ENCODE measurements at regions of chr7 and their contacts with region 1.

Region 1: DNA sequence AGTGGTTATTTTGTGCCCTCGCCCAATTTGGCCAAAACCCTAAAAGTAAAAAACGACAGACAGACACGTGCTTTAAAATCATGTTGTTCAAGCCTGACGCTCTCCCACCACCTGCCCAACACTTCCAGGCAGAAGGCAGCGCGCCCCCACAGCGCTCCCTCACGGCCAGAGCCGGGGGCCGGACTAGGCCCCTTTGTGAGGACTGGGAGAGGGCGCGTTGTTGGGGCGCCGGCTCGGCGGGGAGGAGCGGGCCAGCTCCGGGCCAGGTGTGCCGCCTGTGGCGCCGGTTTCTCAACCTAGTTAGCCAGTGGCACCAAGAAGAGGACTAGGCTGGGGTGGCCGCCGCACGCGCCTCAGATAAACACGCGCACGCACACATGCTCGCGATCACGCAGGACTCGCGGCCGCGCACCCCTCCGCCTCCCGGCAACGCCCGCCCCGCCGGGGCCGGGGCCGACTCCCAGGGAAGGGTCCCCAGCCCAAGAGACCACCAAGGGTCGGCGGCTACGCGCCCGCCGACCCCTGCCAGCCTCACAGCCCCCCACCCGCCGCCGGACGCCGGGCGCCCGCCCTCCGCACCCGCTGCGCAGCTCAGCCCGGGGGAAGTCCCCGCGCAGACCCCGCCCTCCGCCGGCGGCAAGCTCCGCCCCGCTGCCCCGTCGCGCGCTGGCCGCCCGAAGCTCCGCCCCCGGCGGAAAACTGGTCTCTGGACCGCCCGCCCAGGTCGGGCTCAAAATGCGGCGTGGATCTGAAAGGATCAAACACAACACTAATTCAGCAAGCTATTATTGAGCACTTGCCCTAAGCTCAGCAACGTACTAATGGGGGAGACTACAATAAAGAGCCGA is at the start of gene IMMP2L:
- DNase-seq: peak; percentile 84 to 94
- H3K4me3 ChIP-seq: peak within 1 kb of the TSS; percentile 85
- H3K4me3 Mint-ChIP-seq: peak within 1 kb of the TSS; percentile 92
- H3K27ac Mint-ChIP-seq: peak within 1 kb of the TSS; percentile 89
- H3K4me1 ChIP-seq: peaks cover 15% of the 10 kb centered on the region
- H3K4me1 Mint-ChIP-seq: peaks cover 6% of the 10 kb centered on the region
- H3K27me3 ChIP-seq: no peaks in the 10 kb centered on the region
- H3K27me3 Mint-ChIP-seq: no peaks in the 10 kb centered on the region
- CTCF ChIP-seq: peak in 1 of 2 experiments; percentile 73
- total RNA-seq, gene IMMP2L: 9.5 and 14.8 TPM in 2 replicates

Region 2: GRCh38 chr7:111098011-111098925 is 463.8 kb before region 1 on chr7:
- CTCF ChIA-PET with region 1: no interaction called
- POLR2A ChIA-PET with region 1: no interaction called
- intact Hi-C with region 1: loop called (anchors 10 kb)
- DNase-seq: peak in 1 of 2 experiments; percentile 32
- H3K4me3 ChIP-seq: no peak overlapping the region
- H3K4me3 Mint-ChIP-seq: no peak overlapping the region
- H3K27ac Mint-ChIP-seq: no peak overlapping the region
- H3K4me1 ChIP-seq: no peaks in the 10 kb centered on the region
- H3K4me1 Mint-ChIP-seq: no peaks in the 10 kb centered on the region
- H3K27me3 ChIP-seq: no peaks in the 10 kb centered on the region
- H3K27me3 Mint-ChIP-seq: no peaks in the 10 kb centered on the region
- CTCF ChIP-seq: peak; percentile 38 to 54

Region 3: GRCh38 chr7:111424768-111425167 is 137.3 kb before region 1 on chr7:
- CTCF ChIA-PET with region 1: no interaction called
- POLR2A ChIA-PET with region 1: no interaction called
- intact Hi-C with region 1: loop called (anchors 5 kb)
- DNase-seq: peak in 1 of 2 experiments; percentile 34
- H3K4me3 ChIP-seq: no peak overlapping the region
- H3K4me3 Mint-ChIP-seq: no peak overlapping the region
- H3K27ac Mint-ChIP-seq: no peak overlapping the region
- H3K4me1 ChIP-seq: peaks cover 13% of the 10 kb centered on the region
- H3K4me1 Mint-ChIP-seq: peaks cover 6% of the 10 kb centered on the region
- H3K27me3 ChIP-seq: no peaks in the 10 kb centered on the region
- H3K27me3 Mint-ChIP-seq: no peaks in the 10 kb centered on the region
- CTCF ChIP-seq: no peak

Region 4: DNA sequence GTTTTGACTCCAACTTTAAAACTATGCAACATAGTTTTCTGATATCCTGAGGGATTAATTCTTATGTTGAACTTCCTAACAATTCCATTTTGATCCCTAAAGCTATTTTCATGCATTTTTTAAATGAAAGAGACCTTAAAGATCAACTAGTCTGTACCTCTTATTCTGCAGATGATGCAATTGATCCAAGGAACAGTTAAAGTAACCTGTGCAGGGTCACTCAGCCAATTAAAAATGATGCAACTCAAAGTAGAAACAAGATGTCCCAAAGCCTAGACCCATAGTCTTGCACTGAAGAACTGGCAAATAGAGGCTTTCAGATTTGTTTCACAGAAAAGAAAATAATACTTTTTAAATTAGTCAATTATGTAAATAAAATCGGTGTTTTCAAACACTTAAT is 86.2 kb before region 1 on chr7:
- CTCF ChIA-PET with region 1: no interaction called
- POLR2A ChIA-PET with region 1: no interaction called
- intact Hi-C with region 1: no loop called
- DNase-seq: no peak
- H3K4me3 ChIP-seq: no peak overlapping the region
- H3K4me3 Mint-ChIP-seq: no peak overlapping the region
- H3K27ac Mint-ChIP-seq: no peak overlapping the region
- H3K4me1 ChIP-seq: no peaks in the 10 kb centered on the region
- H3K4me1 Mint-ChIP-seq: no peaks in the 10 kb centered on the region
- H3K27me3 ChIP-seq: no peaks in the 10 kb centered on the region
- H3K27me3 Mint-ChIP-seq: no peaks in the 10 kb centered on the region
- CTCF ChIP-seq: no peak

Region 5: DNA sequence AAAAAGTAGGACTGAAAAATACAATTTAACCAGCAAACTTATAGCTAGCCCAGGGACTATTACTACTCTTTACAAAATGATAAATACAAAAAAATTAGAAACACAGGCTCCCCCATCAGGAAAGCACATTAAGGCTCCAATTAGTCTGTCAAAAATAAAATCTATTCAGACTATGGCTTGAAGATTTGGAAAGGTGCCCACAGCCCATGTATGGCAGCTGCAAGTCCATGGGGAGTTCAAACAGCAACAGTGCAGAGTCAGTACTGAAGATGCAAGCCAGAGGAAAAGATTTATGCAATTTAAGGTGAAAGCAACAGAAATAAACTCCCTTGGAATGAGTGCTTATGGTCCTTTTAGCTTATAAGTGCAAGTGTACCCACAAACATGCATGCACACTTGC is 29.5 kb before region 1 on chr7:
- CTCF ChIA-PET with region 1: no interaction called
- POLR2A ChIA-PET with region 1: no interaction called
- intact Hi-C with region 1: loop called (anchors 2 kb)
- DNase-seq: no peak
- H3K4me3 ChIP-seq: no peak overlapping the region
- H3K4me3 Mint-ChIP-seq: no peak overlapping the region
- H3K27ac Mint-ChIP-seq: no peak overlapping the region
- H3K4me1 ChIP-seq: no peaks in the 10 kb centered on the region
- H3K4me1 Mint-ChIP-seq: no peaks in the 10 kb centered on the region
- H3K27me3 ChIP-seq: no peaks in the 10 kb centered on the region
- H3K27me3 Mint-ChIP-seq: no peaks in the 10 kb centered on the region
- CTCF ChIP-seq: no peak

Region 6: DNA sequence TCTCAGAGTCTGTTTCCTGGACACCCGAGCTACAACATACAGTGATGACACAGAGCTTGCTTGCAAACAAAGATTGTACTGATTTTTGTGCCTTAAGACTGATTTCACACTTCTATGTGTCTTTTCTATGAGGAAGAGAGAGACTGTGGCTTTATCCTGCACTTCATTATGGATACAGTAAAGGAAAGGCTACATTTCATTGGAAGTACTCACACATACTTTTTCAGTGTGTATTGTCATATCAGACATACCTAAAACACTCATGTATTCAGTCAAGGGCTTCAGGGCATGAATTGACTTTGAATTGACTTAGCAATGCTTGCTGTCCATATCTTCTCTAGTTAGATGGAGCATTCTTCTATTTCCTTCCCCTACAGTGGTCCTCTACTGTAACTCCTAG is 135.7 kb after region 1 on chr7:
- CTCF ChIA-PET with region 1: no interaction called
- POLR2A ChIA-PET with region 1: no interaction called
- intact Hi-C with region 1: no loop called
- DNase-seq: no peak
- H3K4me3 ChIP-seq: no peak overlapping the region
- H3K4me3 Mint-ChIP-seq: no peak overlapping the region
- H3K27ac Mint-ChIP-seq: no peak overlapping the region
- H3K4me1 ChIP-seq: no peaks in the 10 kb centered on the region
- H3K4me1 Mint-ChIP-seq: no peaks in the 10 kb centered on the region
- H3K27me3 ChIP-seq: no peaks in the 10 kb centered on the region
- H3K27me3 Mint-ChIP-seq: peaks cover 3% of the 10 kb centered on the region
- CTCF ChIP-seq: no peak

Region 7: DNA sequence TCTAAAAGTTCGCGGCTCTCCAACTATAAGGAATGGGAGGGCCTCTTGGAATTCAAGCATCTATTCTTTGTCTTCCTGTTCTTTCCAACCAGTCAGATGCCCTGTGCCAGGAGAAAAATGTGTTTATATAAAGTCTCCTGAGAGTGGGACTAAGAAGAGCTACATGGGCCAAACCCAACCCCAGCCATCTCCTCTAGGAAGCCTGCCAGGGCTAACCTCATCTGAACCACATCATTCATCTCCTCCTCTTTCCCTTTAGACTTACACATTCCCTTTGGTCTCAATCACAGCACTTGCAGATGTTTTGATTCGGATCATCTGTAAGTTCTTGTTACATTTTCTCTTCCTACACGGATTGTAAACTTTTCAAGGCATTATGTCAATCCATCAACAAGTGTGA is 581.5 kb after region 1 on chr7:
- CTCF ChIA-PET with region 1: no interaction called
- POLR2A ChIA-PET with region 1: no interaction called
- intact Hi-C with region 1: no loop called
- DNase-seq: no peak
- H3K4me3 ChIP-seq: no peak overlapping the region
- H3K4me3 Mint-ChIP-seq: no peak overlapping the region
- H3K27ac Mint-ChIP-seq: no peak overlapping the region
- H3K4me1 ChIP-seq: no peaks in the 10 kb centered on the region
- H3K4me1 Mint-ChIP-seq: no peaks in the 10 kb centered on the region
- H3K27me3 ChIP-seq: no peaks in the 10 kb centered on the region
- H3K27me3 Mint-ChIP-seq: no peaks in the 10 kb centered on the region
- CTCF ChIP-seq: no peak

Region 8: GRCh38 chr7:112449902-112450806 is 888.0 kb after region 1 on chr7 and contains the start of gene IFRD1:
- CTCF ChIA-PET with region 1: no interaction called
- POLR2A ChIA-PET with region 1: no interaction called
- intact Hi-C with region 1: loop called (anchors 5 kb)
- DNase-seq: peak; percentile 99
- H3K4me3 ChIP-seq: peak within 1 kb of the TSS; percentile 82
- H3K4me3 Mint-ChIP-seq: peak within 1 kb of the TSS; percentile 95
- H3K27ac Mint-ChIP-seq: peak within 1 kb of the TSS; percentile 98
- H3K4me1 ChIP-seq: peaks cover 9% of the 10 kb centered on the region
- H3K4me1 Mint-ChIP-seq: peaks cover 30% of the 10 kb centered on the region
- H3K27me3 ChIP-seq: no peaks in the 10 kb centered on the region
- H3K27me3 Mint-ChIP-seq: no peaks in the 10 kb centered on the region
- CTCF ChIP-seq: no peak
- total RNA-seq, gene IFRD1: 78.8 and 83.2 TPM in 2 replicates